ENCODE measurements at regions of chr14 and their contacts with region 1.

Region 1: GRCh38 chr14:35140718-35141581 is 18.6 kb downstream of the PRORP start:
- DNase-seq: peak; percentile 68
- ATAC-seq: no peak
- H3K4me3 ChIP-seq: no peak overlapping the region
- H3K27ac ChIP-seq: no peak overlapping the region
- H3K4me1 ChIP-seq: peaks cover 17% of the 10 kb centered on the region
- H3K27me3 ChIP-seq: no peaks in the 10 kb centered on the region
- CTCF ChIP-seq: peak; percentile 64
- EP300 ChIP-seq: no peak
- POLR2A ChIP-seq: no peak
- RAD21 ChIP-seq: peak; percentile 69

Region 2: GRCh38 chr14:35423621-35424020 is 282.7 kb after region 1 on chr14:
- CTCF ChIA-PET with region 1: interaction called, 37 read pairs
- POLR2A ChIA-PET with region 1: interaction called, 4 read pairs
- in situ Hi-C with region 1: no loop called
- intact Hi-C with region 1: loop called (anchors 1 kb)
- DNase-seq: no peak
- ATAC-seq: no peak
- H3K4me3 ChIP-seq: no peak overlapping the region
- H3K27ac ChIP-seq: no peak overlapping the region
- H3K4me1 ChIP-seq: peaks cover 36% of the 10 kb centered on the region
- H3K27me3 ChIP-seq: no peaks in the 10 kb centered on the region; a peak in 1 of 5 replicates
- CTCF ChIP-seq: no peak
- EP300 ChIP-seq: no peak
- POLR2A ChIP-seq: no peak
- RAD21 ChIP-seq: no peak

Measured in HepG2 (cell line).